Ovary (tissue), 10 donors: ENCODE measurements at regions of chr19 and their contacts with region 1.

Region 1: DNA sequence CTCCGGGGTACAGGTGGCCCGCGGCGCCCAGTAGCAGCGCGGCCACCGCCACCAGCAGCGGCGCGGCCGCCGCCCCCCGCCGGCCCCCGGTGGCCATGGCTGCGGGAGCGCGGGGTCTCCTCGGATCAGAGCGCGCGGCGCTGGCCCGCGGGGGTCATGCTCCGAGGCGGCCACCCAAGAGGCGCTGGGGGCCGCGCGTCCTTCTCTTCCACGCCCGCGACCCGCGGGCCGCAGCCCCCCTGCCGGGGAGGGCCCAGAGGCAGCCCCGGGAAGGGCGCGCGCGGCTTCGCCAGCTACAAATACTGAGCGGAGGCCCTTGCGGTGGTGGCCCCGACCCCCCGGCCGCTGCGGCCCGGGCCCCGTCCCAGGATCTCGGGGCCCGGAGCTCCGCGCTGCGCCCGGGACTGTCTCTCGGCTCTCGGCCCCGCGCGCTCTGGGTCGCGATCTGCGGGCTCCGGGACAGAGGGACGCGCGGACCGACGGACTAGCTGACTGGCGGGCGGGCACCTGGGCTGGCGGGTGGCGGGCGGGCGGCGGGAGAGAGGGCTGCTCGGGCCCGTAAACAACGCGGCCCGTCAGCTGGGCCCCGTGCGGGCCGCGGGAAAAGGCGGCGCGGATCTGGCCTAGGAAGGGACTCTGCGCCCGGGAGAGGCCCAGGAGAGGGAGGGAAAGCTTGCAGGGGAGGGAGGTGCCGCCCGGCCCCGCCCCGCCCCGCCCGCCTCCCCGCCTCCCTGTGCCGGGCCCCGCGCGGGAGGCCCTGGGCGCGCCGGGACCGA is at the start of gene INSR:
- DNase-seq: peak; percentile 90 to 93 (median 91)
- H3K4me3 ChIP-seq: peak within 1 kb of the TSS; percentile 99
- H3K27ac ChIP-seq: peak within 1 kb of the TSS; percentile 97 to 99
- H3K4me1 ChIP-seq: peaks cover 6% of the 10 kb centered on the region
- H3K27me3 ChIP-seq: no peaks in the 10 kb centered on the region
- CTCF ChIP-seq: no peak
- EP300 ChIP-seq: no peak
- POLR2A ChIP-seq: peak; percentile 27
- total RNA-seq, gene INSR: 77.2 to 203 (median 113) TPM

Region 2: DNA sequence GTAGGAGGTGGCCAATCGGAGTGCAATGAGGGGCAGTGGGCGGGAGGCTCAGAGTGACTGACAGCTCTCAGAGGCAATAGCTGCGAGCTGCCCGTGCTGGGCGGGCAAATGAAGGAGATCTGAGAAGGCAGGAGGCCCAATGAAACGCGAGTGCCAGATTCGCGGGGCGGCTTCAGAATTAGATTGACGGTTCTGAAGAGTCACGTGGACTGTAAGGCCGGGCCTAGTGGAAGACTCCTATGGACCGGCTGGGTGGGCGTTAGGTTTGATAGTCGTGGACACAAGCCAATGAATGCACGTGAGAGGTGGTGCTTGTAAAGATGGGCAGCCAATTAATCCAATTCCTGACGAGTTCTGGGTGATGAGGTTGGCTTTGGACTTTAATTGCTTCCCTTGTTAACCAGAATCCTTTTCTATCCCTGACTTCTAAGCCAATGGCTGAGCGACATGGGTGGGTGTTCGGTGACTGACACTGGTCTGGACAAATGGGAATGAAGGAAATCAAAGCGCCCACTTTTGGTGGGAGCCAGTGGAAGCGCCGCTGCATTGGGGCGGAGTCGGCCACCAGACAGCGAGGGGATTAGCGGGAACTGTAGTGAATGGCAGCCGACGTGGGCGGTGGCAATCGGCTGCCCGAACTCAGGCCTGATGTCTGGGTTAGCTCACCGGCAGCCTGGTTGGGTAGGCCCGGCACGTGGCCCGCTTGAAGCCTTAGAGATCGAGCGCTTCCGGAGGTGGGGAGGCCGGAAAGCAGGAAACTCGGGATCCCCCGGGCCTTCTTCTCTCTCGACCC is 868.8 kb before region 1 on chr19:
- intact Hi-C with region 1: loop called in 1 of 4 experiments (anchors 5 kb)
- DNase-seq: peak; percentile 99 to 100 (median 100)
- H3K4me3 ChIP-seq: peak overlapping the region; percentile 12
- H3K27ac ChIP-seq: peak overlapping the region; percentile 40 to 89
- H3K4me1 ChIP-seq: peaks cover 4% of the 10 kb centered on the region
- H3K27me3 ChIP-seq: no peaks in the 10 kb centered on the region
- CTCF ChIP-seq: no peak
- EP300 ChIP-seq: no peak
- POLR2A ChIP-seq: no peak

Region 3: GRCh38 chr19:7197760-7198696 is 96.0 kb before region 1 on chr19:
- intact Hi-C with region 1: loop called (anchors 1 to 10 kb)
- DNase-seq: peak; percentile 93 to 96 (median 94)
- H3K4me3 ChIP-seq: peak overlapping the region; percentile 79
- H3K27ac ChIP-seq: peak overlapping the region; percentile 89 to 95
- H3K4me1 ChIP-seq: peaks cover 8% of the 10 kb centered on the region
- H3K27me3 ChIP-seq: no peaks in the 10 kb centered on the region
- CTCF ChIP-seq: peak in 2 of 3 donors; percentile 18 to 29
- EP300 ChIP-seq: no peak
- POLR2A ChIP-seq: peak; percentile 73

Region 4: GRCh38 chr19:7211204-7211951 is 82.6 kb before region 1 on chr19:
- intact Hi-C with region 1: loop called in 2 of 4 experiments (anchors 5 to 10 kb)
- DNase-seq: peak; percentile 85 to 90 (median 86)
- H3K4me3 ChIP-seq: no peak overlapping the region
- H3K27ac ChIP-seq: peak overlapping the region; percentile 65 to 84
- H3K4me1 ChIP-seq: peaks cover 41% of the 10 kb centered on the region
- H3K27me3 ChIP-seq: no peaks in the 10 kb centered on the region
- CTCF ChIP-seq: no peak
- EP300 ChIP-seq: no peak
- POLR2A ChIP-seq: no peak

Region 5: DNA sequence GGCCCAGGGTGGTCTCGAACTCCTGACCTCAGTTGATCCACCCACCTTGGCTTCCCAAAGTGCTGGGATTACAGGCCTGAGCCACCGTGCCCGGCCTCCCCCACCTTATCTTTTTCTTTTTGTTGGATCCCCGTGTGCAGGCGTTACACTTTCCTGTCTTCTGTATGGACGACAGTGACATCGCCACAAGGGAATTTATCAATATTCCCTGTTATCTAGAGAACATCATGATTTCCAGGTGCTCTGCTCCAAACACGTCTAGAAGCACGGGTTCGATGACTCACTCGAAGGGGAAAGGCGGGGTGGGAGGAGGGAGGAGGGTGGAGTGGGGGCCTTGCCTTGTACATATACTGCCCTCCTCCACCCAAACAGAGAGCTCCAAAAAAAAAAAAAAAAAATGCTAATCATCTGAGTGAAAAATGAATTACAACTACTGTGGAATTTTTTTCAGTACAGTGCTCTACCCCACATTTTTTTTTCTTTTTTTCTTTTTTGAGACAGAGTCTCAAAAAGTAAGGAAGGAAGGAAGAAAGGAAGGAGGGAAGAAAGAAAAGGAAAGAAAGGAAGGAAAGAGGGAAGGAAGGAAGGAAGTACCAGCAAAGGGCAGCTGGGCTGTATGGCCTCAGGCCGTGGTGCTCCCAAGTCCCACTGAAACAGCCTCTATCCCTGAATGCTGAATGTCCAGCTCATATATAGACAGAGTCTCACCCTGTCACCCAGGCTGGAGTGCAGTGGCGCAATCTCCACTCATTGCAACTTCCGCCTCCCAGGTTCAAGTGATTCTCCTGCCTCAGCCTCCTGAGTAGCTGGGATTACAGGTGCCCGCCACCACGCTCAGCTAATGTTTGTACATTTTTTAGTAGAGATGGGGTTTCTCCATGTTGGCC is 36.6 kb before region 1 on chr19:
- intact Hi-C with region 1: loop called in 1 of 4 experiments (anchors 5 kb)
- DNase-seq: peak; percentile 75 to 83 (median 77)
- H3K4me3 ChIP-seq: no peak overlapping the region
- H3K27ac ChIP-seq: peak overlapping the region; percentile 64 to 66
- H3K4me1 ChIP-seq: peaks cover 24% of the 10 kb centered on the region
- H3K27me3 ChIP-seq: no peaks in the 10 kb centered on the region
- CTCF ChIP-seq: no peak
- EP300 ChIP-seq: no peak
- POLR2A ChIP-seq: no peak

Region 6: DNA sequence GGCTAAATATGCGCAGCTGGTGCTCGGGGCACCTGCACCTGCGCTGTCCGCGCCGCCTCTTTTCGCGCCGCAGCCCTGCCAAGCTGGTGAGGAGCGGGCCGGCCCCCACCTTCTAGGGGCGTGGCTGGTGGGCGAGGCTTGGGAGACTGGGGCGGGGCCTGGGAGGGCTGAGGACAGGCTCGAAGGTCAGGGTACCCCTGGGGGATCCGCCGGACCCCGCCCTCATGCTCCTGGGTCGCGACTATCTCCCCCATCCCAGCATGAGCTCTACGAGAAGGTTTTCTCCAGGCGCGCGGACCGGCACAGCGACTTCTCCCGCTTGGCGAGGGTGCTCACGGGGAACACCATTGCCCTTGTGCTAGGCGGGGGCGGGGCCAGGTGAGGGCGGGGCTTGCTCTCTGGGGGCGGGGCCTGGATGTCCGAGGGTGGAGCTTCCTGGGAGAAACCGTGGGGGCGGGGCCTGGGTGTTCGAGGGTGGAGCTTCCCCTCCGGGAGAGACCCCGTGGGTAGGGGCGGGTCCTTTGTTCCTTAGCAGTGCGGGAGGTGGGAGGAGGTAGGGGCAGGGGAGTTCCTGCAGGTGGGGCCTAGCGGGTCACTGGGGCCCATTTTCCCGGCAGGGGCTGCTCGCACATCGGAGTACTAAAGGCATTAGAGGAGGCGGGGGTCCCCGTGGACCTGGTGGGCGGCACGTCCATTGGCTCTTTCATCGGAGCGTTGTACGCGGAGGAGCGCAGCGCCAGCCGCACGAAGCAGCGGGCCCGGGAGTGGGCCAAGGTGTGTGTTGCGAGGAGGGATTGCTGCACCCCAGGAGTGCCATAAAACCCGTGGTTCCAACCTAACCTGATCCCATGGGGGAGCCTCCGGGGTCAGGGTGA is 261.2 kb after region 1 on chr19:
- intact Hi-C with region 1: no loop called
- DNase-seq: peak in 3 of 5 donors; percentile 13 to 51 (median 37)
- H3K4me3 ChIP-seq: no peak overlapping the region
- H3K27ac ChIP-seq: no peak overlapping the region
- H3K4me1 ChIP-seq: no peaks in the 10 kb centered on the region
- H3K27me3 ChIP-seq: no peaks in the 10 kb centered on the region
- CTCF ChIP-seq: no peak
- EP300 ChIP-seq: no peak
- POLR2A ChIP-seq: no peak